Head of caudate nucleus (tissue), 42 donors: ENCODE measurements at regions of chr6 and their contacts with region 1.

Region 1: GRCh38 chr6:26596579-26597388 is at the start of gene ABT1:
- DNase-seq: peak; percentile 92 to 99 (median 98)

Region 2: GRCh38 chr6:26196846-26197648 is 399.7 kb before region 1 on chr6:
- intact Hi-C with region 1: loop called (anchors 10 kb)
- DNase-seq: peak in 41 of 42 donors; percentile 58 to 93 (median 80)

Region 3: DNA sequence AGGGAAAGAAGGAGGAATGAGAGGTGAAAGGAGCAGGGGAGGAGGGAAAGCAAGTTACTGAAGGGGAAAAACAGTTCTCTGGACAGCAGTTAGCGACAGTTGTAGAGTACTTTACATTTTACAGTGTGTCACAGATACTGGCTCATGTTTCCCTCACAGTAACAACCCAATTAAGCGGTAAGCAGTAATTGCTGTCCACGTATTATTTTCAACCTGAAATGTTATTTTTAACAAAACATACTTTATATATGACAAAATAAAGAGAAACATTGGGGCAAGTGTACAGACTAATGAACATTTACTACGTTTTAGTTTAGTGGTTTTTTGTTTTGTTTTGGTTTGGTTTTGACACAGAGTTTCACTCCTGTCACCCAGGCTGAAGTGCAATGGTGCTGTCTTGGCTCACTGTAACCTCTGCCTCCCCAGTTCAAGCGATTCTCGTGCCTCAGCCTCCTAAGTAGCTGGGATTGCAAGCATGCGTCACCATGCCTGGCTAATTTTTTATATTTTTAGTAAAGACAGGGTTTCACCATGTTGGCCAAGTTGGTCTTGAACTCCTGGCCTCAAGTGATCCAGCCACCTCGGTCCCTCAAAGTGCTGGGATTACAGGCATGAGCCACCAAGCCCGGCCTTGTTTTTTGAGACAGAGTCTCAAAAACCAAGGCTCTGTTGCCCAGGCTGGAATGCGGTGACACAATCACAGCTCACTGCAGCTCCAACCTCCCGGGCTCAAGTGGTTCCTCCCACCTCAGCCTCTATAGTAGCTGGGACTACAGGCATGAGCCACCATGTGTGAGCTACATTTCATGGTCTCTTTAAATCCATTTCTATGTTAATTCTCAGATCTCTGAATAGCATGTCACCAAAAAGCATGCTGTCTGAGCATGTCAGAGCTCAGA is 254.4 kb before region 1 on chr6:
- intact Hi-C with region 1: loop called (anchors 10 kb)
- DNase-seq: no peak

Region 4: GRCh38 chr6:26659042-26659999 is 62.5 kb after region 1 on chr6 and contains the start of gene ZNF322:
- intact Hi-C with region 1: loop called (anchors 2 kb)
- DNase-seq: peak; percentile 91 to 98 (median 96)

Region 5: GRCh38 chr6:27096834-27097511 is 500.2 kb after region 1 on chr6:
- intact Hi-C with region 1: no loop called
- DNase-seq: peak in 10 of 42 donors; percentile 4 to 55 (median 15)